Vagina (tissue), 2 donors: ENCODE measurements at regions of chr5 and their contacts with region 1.

Region 1: DNA sequence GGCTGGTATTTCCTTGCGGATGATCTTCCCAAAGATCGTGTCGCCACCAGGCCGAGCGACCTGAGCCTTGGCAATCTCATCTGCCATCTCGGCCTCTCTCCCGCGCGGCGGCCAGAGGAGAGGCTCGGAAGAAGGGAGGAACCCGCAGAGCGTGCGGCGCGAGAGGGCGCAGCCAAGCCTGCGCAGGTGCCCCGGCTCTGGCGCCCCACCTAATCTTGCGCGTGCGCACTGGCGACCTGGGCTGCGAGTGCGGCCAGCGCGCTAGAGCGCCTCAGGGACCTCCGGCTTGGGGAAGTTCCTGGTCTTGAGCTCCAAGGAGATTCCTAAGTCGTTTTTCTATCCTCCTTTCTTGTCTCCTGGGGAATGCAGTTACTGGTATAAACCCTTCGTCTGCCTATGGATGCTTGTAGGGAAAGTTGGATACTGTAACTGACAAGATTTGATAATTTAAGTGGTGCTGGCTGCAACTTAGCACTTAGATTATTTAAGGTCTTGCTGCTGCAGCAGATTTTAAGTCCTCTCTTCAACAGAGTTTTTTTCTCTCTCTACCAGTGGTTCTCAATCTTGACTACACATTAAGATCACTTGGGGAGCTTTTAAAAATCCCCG is at the start of gene HINT1:
- DNase-seq: peak in 1 of 2 donors; percentile 92
- H3K4me3 ChIP-seq: peak within 1 kb of the TSS; percentile 70 to 76
- H3K27ac ChIP-seq: peak within 1 kb of the TSS; percentile 95
- H3K4me1 ChIP-seq: peaks cover 31% of the 10 kb centered on the region
- H3K27me3 ChIP-seq: no peaks in the 10 kb centered on the region
- CTCF ChIP-seq: peak in 1 of 3 experiments; percentile 51
- POLR2A ChIP-seq: peak in 1 of 2 donors; percentile 63
- total RNA-seq, gene HINT1: 161 TPM

Region 2: DNA sequence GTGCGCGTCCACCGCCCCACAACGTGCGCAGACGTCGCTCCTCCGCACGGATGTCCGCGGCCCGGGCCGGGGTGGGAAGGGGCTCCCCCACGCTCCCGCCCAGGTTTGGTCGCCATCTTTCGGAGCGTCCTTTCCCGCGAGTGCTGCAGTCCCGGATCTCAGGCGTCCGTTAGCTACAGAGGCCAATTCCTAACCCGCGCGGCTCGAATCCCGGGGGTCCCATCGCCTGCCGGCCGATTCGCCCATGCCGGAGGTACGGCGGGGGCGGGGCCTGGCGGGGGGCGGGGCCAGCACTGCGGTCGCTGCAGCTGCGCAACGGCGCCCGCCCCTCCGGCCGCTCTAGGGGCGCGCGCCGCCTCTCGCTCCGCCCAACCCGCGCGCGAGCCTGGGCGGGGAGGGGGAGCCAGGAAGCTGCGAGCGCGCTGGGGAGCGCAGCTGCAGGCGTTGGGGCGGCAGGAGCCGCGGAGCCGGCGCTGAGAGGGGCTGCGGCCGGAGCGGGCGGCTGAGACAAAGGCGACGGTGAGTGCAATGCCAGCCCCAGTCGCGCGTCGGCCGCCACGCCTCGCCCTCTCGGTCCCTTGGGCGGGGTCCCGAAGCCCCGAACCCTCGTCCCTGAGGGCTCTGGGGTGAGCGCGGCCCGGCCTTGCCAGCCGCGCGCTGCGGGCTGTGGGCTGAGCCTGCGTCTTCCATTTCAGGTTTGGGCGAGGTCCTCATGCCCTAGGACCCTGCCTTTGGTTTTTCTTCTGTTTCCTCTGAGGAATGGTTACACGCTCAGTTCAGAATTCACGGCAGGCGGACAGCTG is 98.6 kb after region 1 on chr5 and contains the start of gene CDC42SE2:
- intact Hi-C with region 1: loop called (anchors 10 kb)
- DNase-seq: no peak
- H3K4me3 ChIP-seq: peak within 1 kb of the TSS; percentile 84
- H3K27ac ChIP-seq: peak within 1 kb of the TSS; percentile 89
- H3K4me1 ChIP-seq: peaks cover 35% of the 10 kb centered on the region
- H3K27me3 ChIP-seq: no peaks in the 10 kb centered on the region
- CTCF ChIP-seq: no peak
- POLR2A ChIP-seq: peak; percentile 51 to 92
- total RNA-seq, gene CDC42SE2: 19.4 TPM